ENCODE measurements at regions of chr3 and their contacts with region 1.

Region 1: DNA sequence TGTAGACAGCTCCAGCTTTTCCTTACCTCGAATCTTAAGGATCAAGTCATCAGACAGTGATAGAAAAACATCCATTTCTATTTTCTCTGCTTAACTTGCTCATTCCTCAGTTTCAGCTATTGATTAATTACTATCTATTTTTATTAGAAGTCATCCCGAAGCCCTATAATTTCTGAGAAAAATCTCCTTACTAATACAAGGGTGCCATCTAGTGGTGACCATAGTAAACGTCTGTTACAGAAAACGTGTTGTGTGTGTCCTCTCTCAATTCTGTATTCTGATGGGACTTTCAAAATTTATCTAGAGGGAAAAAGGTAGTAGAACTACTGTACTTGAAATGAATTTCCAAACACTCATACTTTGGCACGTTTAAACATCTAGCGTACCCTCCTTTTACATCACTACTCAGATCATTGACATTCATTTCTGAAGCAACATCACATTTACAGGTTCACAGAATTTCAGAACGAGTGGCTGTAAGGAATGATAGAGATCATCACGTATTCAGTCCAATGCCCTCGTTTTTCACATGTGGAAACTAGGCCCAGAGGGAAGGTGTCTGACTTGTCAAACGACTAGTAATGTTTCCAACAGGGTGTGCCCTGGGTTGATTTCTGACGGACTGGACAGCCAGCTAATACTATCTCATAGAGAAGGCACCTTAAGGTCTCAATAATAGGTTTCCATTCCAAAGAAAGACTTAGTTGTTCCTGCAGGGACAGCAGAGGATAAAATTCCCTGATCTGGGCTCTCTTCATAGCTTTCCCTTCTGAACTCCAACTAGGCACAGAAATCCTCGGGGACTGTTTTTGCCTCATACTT is 25.6 kb downstream of the HACD2 start:
- DNase-seq: no peak
- H3K4me3 Mint-ChIP-seq: no peak overlapping the region
- H3K27ac Mint-ChIP-seq: no peak overlapping the region
- H3K4me1 Mint-ChIP-seq: peaks cover 16% of the 10 kb centered on the region
- H3K27me3 Mint-ChIP-seq: no peaks in the 10 kb centered on the region

Region 2: GRCh38 chr3:123015557-123015956 is 543.7 kb before region 1 on chr3:
- CTCF ChIA-PET with region 1: no interaction called
- POLR2A ChIA-PET with region 1: no interaction called
- intact Hi-C with region 1: no loop called
- DNase-seq: no peak
- H3K4me3 Mint-ChIP-seq: no peak overlapping the region
- H3K27ac Mint-ChIP-seq: no peak overlapping the region
- H3K4me1 Mint-ChIP-seq: no peaks in the 10 kb centered on the region
- H3K27me3 Mint-ChIP-seq: peaks cover 16% of the 10 kb centered on the region

Region 3: GRCh38 chr3:123328851-123329635 is 230.2 kb before region 1 on chr3:
- CTCF ChIA-PET with region 1: interaction called, 114 read pairs
- POLR2A ChIA-PET with region 1: no interaction called
- intact Hi-C with region 1: loop called (anchors 1 kb)
- DNase-seq: peak; percentile 80
- H3K4me3 Mint-ChIP-seq: no peak overlapping the region
- H3K27ac Mint-ChIP-seq: no peak overlapping the region
- H3K4me1 Mint-ChIP-seq: no peaks in the 10 kb centered on the region
- H3K27me3 Mint-ChIP-seq: no peaks in the 10 kb centered on the region

Region 4: DNA sequence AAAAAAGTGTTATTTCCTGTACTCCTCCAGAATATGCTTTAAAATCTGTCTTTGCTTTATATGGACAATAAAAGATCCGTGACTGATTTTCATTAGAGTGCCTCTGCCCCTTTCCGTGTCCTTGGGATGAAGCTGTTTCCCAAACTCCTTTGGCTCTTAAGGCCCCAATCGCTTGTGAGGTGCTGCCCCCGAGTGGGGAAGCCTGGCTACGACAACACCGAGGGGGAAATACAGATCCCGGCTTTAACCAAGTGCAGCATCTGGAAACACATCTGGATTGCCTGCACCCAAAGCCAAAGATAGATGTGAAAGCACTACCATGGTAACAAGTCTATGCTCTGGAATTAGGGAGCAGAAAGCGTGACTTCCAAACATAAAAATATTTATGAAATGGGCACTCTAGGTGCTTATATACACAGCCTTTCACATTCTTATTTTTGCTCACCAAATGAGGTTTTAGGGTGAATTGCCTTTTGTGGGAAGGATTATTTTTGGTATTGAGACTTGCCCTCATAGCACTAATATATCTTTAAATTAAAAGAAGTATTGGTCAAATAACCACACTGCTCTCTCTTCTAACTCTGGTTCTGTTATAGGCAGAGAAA is 69.7 kb before region 1 on chr3:
- CTCF ChIA-PET with region 1: interaction called, 24 read pairs
- POLR2A ChIA-PET with region 1: no interaction called
- intact Hi-C with region 1: no loop called
- DNase-seq: peak; percentile 63
- H3K4me3 Mint-ChIP-seq: no peak overlapping the region
- H3K27ac Mint-ChIP-seq: no peak overlapping the region
- H3K4me1 Mint-ChIP-seq: no peaks in the 10 kb centered on the region
- H3K27me3 Mint-ChIP-seq: no peaks in the 10 kb centered on the region

Region 5: GRCh38 chr3:123540285-123540684 is 19.0 kb before region 1 on chr3:
- CTCF ChIA-PET with region 1: interaction called, 8 read pairs
- POLR2A ChIA-PET with region 1: no interaction called
- intact Hi-C with region 1: loop called (anchors 1 kb)
- DNase-seq: no peak
- H3K4me3 Mint-ChIP-seq: no peak overlapping the region
- H3K27ac Mint-ChIP-seq: peak overlapping the region; percentile 62
- H3K4me1 Mint-ChIP-seq: peaks cover 19% of the 10 kb centered on the region
- H3K27me3 Mint-ChIP-seq: no peaks in the 10 kb centered on the region

Region 6: DNA sequence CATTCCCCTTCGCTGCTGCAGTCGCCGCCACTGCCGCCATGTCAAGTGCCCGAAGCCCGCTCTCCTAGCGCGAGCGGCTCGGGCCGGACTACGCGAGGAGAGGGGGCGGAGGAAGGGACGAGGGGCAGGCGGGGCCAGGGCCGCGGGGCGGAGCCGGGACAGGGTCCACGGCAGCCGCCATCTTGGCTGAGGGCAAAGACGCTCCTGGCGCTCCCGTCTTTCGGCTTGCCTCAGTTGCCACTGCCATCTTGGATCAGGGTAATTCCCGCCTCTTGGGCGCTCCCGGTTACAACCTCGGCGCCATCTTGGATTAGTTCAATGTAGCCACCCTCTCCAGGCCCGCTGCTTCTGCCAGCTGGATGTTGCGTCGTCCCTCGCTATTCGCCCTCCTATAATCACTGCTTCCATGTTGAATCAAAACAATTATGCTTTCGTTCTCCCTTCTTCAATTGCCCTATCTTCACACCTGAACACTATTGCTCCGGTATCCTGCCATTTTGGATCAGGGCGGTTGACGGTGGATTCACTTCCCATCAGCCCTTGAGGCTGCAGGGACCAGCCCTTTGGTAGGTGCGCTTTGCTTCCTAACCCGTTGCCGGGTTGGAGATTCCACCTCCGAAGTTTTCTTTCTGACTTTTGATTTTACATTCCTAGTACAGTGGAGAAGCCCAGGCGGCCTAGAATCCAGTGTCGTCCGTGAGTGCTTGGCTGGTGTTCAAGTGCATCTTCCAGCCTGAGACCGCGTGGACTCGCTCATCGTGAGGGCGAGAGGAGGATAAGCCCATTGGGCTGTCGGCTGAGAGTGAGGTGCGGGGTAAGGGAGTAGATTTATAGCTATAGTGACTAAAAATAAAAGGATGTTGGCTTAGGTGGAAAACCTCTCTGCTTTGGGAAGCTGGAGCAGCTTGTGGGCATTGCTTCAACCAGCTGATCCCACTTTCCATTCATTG is 26.0 kb after region 1 on chr3 and contains the start of gene HACD2:
- CTCF ChIA-PET with region 1: interaction called, 14 read pairs
- POLR2A ChIA-PET with region 1: no interaction called
- intact Hi-C with region 1: no loop called
- DNase-seq: peak; percentile 96
- H3K4me3 Mint-ChIP-seq: no peak within 1 kb of the TSS
- H3K27ac Mint-ChIP-seq: peak within 1 kb of the TSS; percentile 65
- H3K4me1 Mint-ChIP-seq: peaks cover 18% of the 10 kb centered on the region
- H3K27me3 Mint-ChIP-seq: no peaks in the 10 kb centered on the region
- total RNA-seq, gene HACD2: 27.0 to 27.9 TPM

Region 7: GRCh38 chr3:124298726-124299350 is 739.6 kb after region 1 on chr3:
- CTCF ChIA-PET with region 1: no interaction called
- POLR2A ChIA-PET with region 1: no interaction called
- intact Hi-C with region 1: no loop called
- DNase-seq: no peak
- H3K4me3 Mint-ChIP-seq: no peak overlapping the region
- H3K27ac Mint-ChIP-seq: no peak overlapping the region
- H3K4me1 Mint-ChIP-seq: no peaks in the 10 kb centered on the region
- H3K27me3 Mint-ChIP-seq: peaks cover 7% of the 10 kb centered on the region